ENCODE measurements at regions of chr5 and their contacts with region 1.

Region 1: DNA sequence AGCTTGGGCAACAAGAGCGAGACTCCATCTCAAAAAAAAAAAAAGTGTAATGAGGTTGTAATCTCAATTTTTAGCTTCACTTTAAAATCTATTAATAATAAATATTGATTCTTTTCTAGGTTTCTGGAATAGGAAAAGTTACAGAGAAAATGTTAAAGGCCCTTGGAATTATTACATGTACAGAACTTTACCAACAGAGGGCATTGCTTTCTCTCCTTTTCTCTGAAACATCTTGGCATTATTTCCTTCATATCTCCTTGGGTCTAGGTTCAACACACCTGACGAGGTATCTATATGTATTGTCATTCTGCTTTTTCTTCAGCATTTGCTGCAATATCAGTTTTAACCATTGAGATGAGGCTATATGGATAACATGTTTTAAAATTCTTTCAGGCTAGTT is 26.6 kb upstream of the ANKDD1B start:
- DNase-seq: no peak
- H3K4me3 ChIP-seq: no peak overlapping the region
- H3K27ac ChIP-seq: no peak overlapping the region
- H3K4me1 ChIP-seq: no peaks in the 10 kb centered on the region
- H3K27me3 ChIP-seq: no peaks in the 10 kb centered on the region
- CTCF ChIP-seq: peak; percentile 9 to 44

Region 2: DNA sequence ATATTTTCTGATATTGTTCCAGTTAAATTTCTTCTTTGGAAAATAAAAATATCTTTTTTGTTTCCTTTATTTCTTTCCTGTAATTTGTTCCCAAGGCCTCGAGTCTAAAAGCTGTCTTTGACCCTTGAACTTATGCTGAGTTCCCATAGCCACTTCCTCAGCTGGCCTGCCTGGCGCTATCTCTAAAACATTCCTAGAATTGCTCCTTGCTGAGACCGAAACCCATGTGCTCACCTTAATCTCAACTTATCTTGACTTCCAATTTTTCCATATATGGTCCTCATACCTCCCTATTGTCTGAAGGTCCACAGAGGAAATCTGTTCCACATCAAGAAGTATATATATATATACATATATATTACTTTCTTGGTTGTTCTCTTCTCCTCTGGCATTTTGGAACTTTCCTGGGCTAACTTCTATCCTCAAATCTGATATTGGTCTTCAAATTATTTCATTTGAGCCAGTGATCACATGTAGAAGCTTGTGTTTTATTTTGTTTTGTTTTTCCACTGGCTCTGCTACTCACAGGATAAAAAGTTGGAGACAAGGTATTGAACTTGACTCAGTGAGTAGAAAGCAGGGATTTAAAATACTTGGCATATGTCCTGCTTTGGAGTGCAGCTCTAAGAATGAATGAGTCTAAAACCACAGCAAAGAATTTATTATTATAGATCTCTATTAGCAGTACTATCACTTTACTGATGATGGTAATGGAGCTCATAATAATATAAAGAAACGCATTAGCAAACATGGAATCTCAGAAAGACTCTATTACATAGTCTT is 989.3 kb before region 1 on chr5:
- CTCF ChIA-PET with region 1: interaction called, 17 read pairs
- dilution Hi-C with region 1: no loop called
- in situ Hi-C with region 1: no loop called
- intact Hi-C with region 1: no loop called
- DNase-seq: no peak
- H3K4me3 ChIP-seq: no peak overlapping the region
- H3K27ac ChIP-seq: no peak overlapping the region
- H3K4me1 ChIP-seq: peaks cover 4% of the 10 kb centered on the region
- H3K27me3 ChIP-seq: no peaks in the 10 kb centered on the region
- CTCF ChIP-seq: no peak

Region 3: DNA sequence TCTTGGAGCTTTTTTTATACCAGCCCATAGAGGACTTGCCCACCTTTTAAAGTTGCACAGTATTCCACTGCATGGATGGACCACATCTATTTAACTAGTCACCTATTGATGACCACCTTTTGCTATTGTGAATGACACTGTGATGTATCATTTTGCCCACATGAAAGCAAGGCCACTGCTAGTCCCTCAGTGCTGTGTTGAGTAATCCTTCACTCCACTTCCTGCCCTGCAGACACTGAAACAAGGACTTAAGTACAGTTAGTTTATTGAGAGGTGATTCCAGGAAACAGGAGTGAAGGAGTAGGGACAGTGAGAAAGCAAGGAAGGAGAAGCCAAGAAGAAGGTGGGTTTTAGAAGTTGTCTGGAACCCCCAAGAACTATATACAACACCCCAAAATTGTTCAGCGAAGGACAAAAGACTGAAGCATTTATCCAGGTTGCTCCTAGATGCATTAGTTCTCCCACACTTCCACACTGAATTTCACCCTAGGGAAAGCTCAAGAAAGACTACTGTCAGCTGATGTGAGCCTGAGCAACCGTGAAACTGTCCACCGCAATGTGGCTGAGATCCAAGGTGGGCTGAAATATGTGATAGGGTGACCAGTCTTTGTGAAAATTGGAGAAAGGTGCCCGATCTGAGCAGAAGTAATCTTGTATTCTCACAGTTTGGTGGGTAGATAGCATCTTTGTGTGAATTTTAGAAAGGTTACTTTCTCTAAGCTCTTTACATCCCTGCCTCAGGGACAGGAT is 302.8 kb before region 1 on chr5:
- CTCF ChIA-PET with region 1: no interaction called
- dilution Hi-C with region 1: no loop called
- in situ Hi-C with region 1: no loop called
- intact Hi-C with region 1: no loop called
- DNase-seq: peak; percentile 56
- H3K4me3 ChIP-seq: no peak overlapping the region
- H3K27ac ChIP-seq: no peak overlapping the region
- H3K4me1 ChIP-seq: peaks cover 5% of the 10 kb centered on the region
- H3K27me3 ChIP-seq: no peaks in the 10 kb centered on the region
- CTCF ChIP-seq: no peak

Region 4: DNA sequence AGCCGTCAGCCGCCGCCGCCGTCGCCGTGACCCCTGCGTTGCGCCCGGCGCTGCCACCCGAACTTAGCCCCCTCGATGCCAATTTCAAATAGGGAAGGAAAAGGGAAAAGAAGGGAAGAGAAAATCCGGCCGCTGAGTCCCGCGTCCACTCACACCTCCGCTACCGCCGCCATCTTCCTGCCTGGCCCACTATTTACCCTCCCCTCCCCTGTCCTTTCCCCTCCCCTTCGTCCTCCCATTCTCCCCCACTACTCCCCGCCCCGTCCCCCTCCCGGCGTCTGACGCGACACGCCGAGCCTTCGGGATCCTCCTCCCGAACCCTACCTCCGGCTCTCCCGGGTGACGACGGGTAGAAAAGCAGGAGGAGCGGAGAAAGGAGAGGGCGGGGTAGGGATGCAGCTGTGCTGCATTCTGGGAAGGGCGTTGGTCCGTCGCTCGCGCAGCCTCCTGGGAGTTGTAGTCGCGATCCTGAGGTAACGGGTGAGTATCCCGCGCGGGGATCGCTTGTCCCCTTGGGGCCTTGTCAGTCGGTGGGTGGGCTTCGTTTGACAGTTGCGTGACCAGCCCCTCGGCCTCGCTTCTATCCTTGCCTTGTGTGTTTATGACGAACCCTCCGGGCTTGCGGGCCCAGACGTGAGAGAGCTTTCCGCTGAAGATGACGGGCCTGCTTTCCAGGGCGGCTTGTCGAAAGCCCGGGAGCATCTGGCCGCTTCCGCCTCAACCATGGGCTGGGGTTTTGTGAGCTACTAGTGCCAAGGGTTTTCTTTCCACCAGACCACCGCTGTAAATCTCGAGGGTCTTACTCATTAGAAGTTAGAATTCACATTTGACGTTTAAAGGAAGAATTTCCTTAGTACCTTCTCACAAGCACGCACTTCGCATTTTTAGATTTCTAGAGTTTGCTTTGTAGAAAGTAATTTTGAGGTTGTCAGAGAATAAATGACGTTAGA is 72.9 kb before region 1 on chr5 and contains the starts of genes CERT1 and POLK:
- CTCF ChIA-PET with region 1: no interaction called
- dilution Hi-C with region 1: no loop called
- in situ Hi-C with region 1: no loop called
- intact Hi-C with region 1: loop called (anchors 5 kb)
- DNase-seq: peak; percentile 99
- H3K4me3 ChIP-seq: peak within 1 kb of the TSS; percentile 78 to 88 (median 88)
- H3K27ac ChIP-seq: peak within 1 kb of the TSS; percentile 82
- H3K4me1 ChIP-seq: peaks cover 12% of the 10 kb centered on the region
- H3K27me3 ChIP-seq: no peaks in the 10 kb centered on the region
- CTCF ChIP-seq: no peak
- total RNA-seq, gene CERT1: 25.7 to 27.5 TPM
- total RNA-seq, gene POLK: 26.4 to 32.8 TPM

Region 5: GRCh38 chr5:75529185-75529584 is 55.5 kb before region 1 on chr5:
- CTCF ChIA-PET with region 1: no interaction called
- dilution Hi-C with region 1: no loop called
- in situ Hi-C with region 1: no loop called
- intact Hi-C with region 1: no loop called
- DNase-seq: no peak
- H3K4me3 ChIP-seq: no peak overlapping the region
- H3K27ac ChIP-seq: no peak overlapping the region
- H3K4me1 ChIP-seq: peaks cover 6% of the 10 kb centered on the region
- H3K27me3 ChIP-seq: no peaks in the 10 kb centered on the region
- CTCF ChIP-seq: no peak

Region 6: GRCh38 chr5:75668977-75669689 is 84.5 kb after region 1 on chr5:
- CTCF ChIA-PET with region 1: no interaction called
- dilution Hi-C with region 1: no loop called
- in situ Hi-C with region 1: no loop called
- intact Hi-C with region 1: loop called (anchors 5 kb)
- DNase-seq: peak; percentile 6
- H3K4me3 ChIP-seq: no peak overlapping the region
- H3K27ac ChIP-seq: no peak overlapping the region
- H3K4me1 ChIP-seq: no peaks in the 10 kb centered on the region
- H3K27me3 ChIP-seq: no peaks in the 10 kb centered on the region
- CTCF ChIP-seq: no peak

Region 7: GRCh38 chr5:75681125-75681830 is 96.6 kb after region 1 on chr5:
- CTCF ChIA-PET with region 1: no interaction called
- dilution Hi-C with region 1: no loop called
- in situ Hi-C with region 1: no loop called
- intact Hi-C with region 1: loop called (anchors 1 kb)
- DNase-seq: peak; percentile 40
- H3K4me3 ChIP-seq: peak overlapping the region; percentile 33 to 52 (median 34)
- H3K27ac ChIP-seq: peak overlapping the region; percentile 22
- H3K4me1 ChIP-seq: peaks cover 6% of the 10 kb centered on the region
- H3K27me3 ChIP-seq: no peaks in the 10 kb centered on the region
- CTCF ChIP-seq: peak; percentile 58 to 61

Region 8: GRCh38 chr5:76175051-76175666 is 590.5 kb after region 1 on chr5:
- CTCF ChIA-PET with region 1: no interaction called
- dilution Hi-C with region 1: no loop called
- in situ Hi-C with region 1: no loop called
- intact Hi-C with region 1: loop called (anchors 2 kb)
- DNase-seq: peak; percentile 34
- H3K4me3 ChIP-seq: no peak overlapping the region
- H3K27ac ChIP-seq: no peak overlapping the region
- H3K4me1 ChIP-seq: no peaks in the 10 kb centered on the region
- H3K27me3 ChIP-seq: no peaks in the 10 kb centered on the region
- CTCF ChIP-seq: peak; percentile 91 to 95